ENCODE measurements at regions of chr2 and their contacts with region 1.

Region 1: GRCh38 chr2:135664623-135665068 is 77.0 kb upstream of the UBXN4 start:
- DNase-seq: no peak
- H3K4me3 Mint-ChIP-seq: no peak overlapping the region
- H3K27ac Mint-ChIP-seq: peak overlapping the region; percentile 71
- H3K4me1 Mint-ChIP-seq: peaks cover 37% of the 10 kb centered on the region
- H3K27me3 Mint-ChIP-seq: no peaks in the 10 kb centered on the region

Region 2: DNA sequence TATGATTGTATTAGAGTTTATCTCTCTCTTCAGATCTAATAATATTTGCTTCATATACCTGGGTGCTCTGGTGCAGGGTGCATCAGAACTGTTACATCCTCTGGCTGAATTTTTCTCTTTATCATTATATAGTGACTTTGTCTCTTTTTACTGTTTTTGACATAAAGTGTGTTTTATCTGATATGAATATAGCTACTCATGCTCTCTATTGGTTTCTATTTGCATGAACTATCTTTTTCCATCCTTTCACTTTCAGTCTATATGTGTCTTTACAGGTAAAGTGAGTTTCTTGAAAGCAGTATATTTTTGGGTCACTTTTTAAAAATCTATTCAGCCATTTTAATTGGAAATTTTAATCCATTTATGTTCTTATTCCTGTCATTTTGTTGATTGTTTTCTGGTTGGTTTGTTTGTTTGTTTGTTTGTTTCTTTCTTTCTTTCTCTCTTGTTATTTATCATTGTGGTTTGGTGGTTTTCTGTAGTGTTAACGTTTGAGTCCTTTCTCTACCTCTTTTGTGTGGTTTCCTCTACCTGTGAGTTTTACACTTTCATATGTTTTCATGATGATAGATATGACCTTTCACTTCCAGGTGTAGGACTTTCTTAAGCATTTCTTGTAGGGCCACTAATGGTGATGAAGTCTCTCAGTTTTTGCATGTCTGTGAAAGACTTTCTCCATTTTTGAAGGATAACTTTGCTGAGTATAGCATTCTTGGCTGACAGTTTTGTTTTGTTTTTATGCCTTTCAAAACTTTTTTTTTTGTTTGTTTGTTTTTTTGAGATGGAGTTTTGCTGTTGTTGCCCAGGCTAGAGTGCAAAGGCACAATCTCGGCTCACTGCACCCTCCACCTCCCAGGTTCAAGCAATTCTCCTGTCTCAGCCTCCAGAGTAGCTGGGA is 691.2 kb before region 1 on chr2:
- intact Hi-C with region 1: loop called (anchors 1 kb)
- DNase-seq: no peak
- H3K4me3 Mint-ChIP-seq: peak overlapping the region; percentile 0
- H3K27ac Mint-ChIP-seq: peak overlapping the region; percentile 54
- H3K4me1 Mint-ChIP-seq: peaks cover 15% of the 10 kb centered on the region
- H3K27me3 Mint-ChIP-seq: peaks cover 15% of the 10 kb centered on the region

Region 3: GRCh38 chr2:135620198-135620597 is 44.4 kb before region 1 on chr2:
- intact Hi-C with region 1: loop called (anchors 1 kb)
- DNase-seq: no peak
- H3K4me3 Mint-ChIP-seq: no peak overlapping the region
- H3K27ac Mint-ChIP-seq: peak overlapping the region; percentile 12
- H3K4me1 Mint-ChIP-seq: peaks cover 9% of the 10 kb centered on the region
- H3K27me3 Mint-ChIP-seq: no peaks in the 10 kb centered on the region

Region 4: GRCh38 chr2:135637456-135638087 is 27.1 kb before region 1 on chr2:
- intact Hi-C with region 1: loop called (anchors 1 kb)
- DNase-seq: no peak
- H3K4me3 Mint-ChIP-seq: no peak overlapping the region
- H3K27ac Mint-ChIP-seq: peak overlapping the region; percentile 70
- H3K4me1 Mint-ChIP-seq: peaks cover 12% of the 10 kb centered on the region
- H3K27me3 Mint-ChIP-seq: no peaks in the 10 kb centered on the region

Region 5: GRCh38 chr2:135689679-135690078 is 25.0 kb after region 1 on chr2:
- intact Hi-C with region 1: loop called (anchors 1 kb)
- DNase-seq: no peak
- H3K4me3 Mint-ChIP-seq: peak overlapping the region; percentile 58
- H3K27ac Mint-ChIP-seq: peak overlapping the region; percentile 71
- H3K4me1 Mint-ChIP-seq: peaks cover 27% of the 10 kb centered on the region
- H3K27me3 Mint-ChIP-seq: peaks cover 1% of the 10 kb centered on the region

Region 6: GRCh38 chr2:135741395-135742324 is 77.0 kb after region 1 on chr2 and contains the start of gene UBXN4:
- intact Hi-C with region 1: loop called (anchors 1 kb)
- DNase-seq: peak; percentile 89
- H3K4me3 Mint-ChIP-seq: peak within 1 kb of the TSS; percentile 99
- H3K27ac Mint-ChIP-seq: peak within 1 kb of the TSS; percentile 100
- H3K4me1 Mint-ChIP-seq: peaks cover 36% of the 10 kb centered on the region
- H3K27me3 Mint-ChIP-seq: no peaks in the 10 kb centered on the region
- total RNA-seq, gene UBXN4: 115 and 121 TPM in 2 replicates

Region 7: DNA sequence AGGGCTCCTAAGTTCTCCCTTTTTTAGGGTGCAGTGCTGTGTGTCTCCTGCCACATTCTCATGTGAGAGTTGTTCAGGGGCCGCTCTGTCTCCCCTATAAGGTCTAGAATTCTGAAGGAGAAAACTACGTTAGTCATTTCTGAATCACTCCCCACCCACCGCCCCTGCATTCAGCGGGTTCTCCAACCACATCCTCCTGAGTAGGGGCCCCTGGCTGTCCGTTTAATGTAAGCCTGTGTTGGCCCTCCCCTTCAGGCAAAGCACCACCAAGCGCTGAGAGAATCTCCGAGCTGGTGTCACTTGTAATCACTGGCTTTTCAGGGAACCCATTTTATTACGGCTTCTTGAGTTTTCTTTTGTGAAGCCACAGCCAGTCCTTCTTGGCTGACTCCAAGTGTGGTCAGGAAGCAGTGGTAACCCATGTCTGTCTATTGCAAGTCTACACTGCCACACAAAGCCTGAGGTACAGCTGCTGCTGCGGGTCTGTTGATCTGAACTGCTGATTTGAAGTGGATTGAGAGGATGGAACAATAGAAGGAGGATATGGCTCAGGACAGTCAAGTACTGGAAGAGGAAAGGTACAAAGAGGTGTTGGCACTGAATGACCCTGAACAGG is 155.5 kb after region 1 on chr2:
- intact Hi-C with region 1: loop called (anchors 5 kb)
- DNase-seq: peak; percentile 75
- H3K4me3 Mint-ChIP-seq: peak overlapping the region; percentile 80
- H3K27ac Mint-ChIP-seq: peak overlapping the region; percentile 89
- H3K4me1 Mint-ChIP-seq: peaks cover 52% of the 10 kb centered on the region
- H3K27me3 Mint-ChIP-seq: no peaks in the 10 kb centered on the region